ENCODE measurements at regions of chr9 and their contacts with region 1.

Region 1: DNA sequence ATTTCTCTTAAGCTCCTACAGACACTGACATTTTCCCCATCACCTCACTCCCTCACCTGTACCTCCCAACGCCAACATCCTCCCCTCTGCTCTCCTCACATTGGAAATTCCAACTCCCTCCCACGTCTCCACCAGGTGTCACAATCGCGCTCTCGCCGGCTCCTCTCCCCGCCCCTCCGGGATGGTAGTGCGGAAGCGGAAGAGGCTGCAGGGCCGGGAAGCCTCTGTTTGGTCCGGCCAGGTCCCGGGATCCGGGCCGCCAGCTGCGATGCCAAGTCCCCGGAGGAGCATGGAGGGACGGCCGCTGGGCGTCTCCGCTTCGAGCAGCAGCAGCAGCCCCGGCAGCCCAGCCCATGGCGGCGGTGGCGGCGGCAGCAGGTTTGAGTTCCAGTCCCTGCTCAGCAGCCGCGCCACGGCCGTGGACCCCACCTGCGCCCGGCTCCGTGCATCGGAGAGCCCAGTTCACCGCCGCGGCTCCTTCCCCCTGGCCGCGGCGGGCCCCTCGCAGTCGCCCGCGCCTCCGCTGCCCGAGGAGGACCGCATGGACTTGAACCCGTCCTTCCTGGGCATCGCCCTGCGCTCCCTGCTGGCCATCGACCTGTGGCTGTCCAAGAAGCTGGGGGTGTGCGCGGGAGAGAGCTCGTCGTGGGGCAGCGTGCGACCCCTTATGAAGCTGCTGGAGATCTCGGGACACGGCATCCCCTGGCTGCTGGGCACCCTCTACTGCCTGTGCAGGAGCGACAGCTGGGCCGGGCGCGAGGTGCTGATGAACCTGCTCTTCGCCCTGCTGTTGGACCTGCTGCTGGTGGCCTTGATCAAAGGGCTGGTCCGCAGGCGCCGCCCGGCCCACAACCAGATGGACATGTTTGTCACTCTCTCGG is at the start of gene PLPP6:
- DNase-seq: peak; percentile 70 to 86 (median 76)
- H3K4me3 ChIP-seq: peak within 1 kb of the TSS; percentile 42 to 83
- H3K4me3 Mint-ChIP-seq: peak within 1 kb of the TSS; percentile 91 to 99 (median 96)
- H3K27ac ChIP-seq: peak within 1 kb of the TSS; percentile 67
- H3K27ac Mint-ChIP-seq: peak within 1 kb of the TSS; percentile 95 to 99 (median 96)
- H3K4me1 ChIP-seq: peaks cover 58% of the 10 kb centered on the region
- H3K4me1 Mint-ChIP-seq: peaks cover 47 to 78% (median 59%) of the 10 kb centered on the region in 4 donors
- H3K27me3 ChIP-seq: no peaks in the 10 kb centered on the region
- H3K27me3 Mint-ChIP-seq: no peaks in the 10 kb centered on the region
- total RNA-seq, gene PLPP6: 23.3 to 23.8 TPM

Region 2: DNA sequence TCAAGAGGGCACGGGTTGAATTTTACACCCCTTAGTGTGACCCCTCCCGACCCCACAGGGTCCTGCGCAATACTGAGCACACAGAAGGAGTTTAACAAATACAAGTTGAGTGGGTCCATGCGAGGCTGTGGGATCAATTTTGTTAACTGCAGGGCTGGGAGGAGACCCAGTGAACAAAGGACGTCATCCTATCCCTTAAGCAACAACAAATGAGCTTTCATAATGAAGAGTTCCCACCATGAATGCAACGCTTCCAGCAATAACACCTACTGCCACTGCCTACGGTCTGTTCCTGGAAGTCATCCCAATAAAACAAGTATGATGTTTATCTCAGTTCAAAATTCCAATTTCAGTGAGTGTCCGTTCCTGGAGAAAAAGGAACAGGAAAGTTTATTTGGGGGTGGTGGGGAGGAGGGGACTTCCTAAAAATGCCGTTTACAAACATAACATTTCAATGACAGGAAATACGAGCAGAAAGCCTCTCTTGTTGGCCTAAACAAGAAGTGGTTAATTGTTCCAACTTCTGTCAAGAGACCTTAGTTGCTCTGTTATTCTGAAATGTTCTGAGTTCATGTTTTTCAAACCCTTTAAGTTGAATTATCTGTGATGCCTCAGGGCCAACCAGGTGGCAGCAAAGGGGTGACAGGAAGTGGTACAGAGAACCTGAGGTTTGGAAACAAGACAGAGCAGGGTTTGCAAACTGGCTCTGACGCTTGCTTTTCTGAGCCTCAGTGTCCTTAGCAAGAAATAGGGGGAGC is 66.0 kb before region 1 on chr9:
- CTCF ChIA-PET with region 1: no interaction called
- POLR2A ChIA-PET with region 1: interaction called, 4 read pairs
- intact Hi-C with region 1: loop called (anchors 2 kb)
- DNase-seq: peak; percentile 77 to 83 (median 81)
- H3K4me3 ChIP-seq: no peak overlapping the region
- H3K4me3 Mint-ChIP-seq: peak overlapping the region; percentile 32 to 87 (median 62)
- H3K27ac ChIP-seq: peak overlapping the region; percentile 30
- H3K27ac Mint-ChIP-seq: peak overlapping the region; percentile 79 to 98 (median 95)
- H3K4me1 ChIP-seq: peaks cover 51% of the 10 kb centered on the region
- H3K4me1 Mint-ChIP-seq: peaks cover 32 to 62% (median 47%) of the 10 kb centered on the region in 4 donors
- H3K27me3 ChIP-seq: no peaks in the 10 kb centered on the region
- H3K27me3 Mint-ChIP-seq: no peaks in the 10 kb centered on the region

Region 3: GRCh38 chr9:4713849-4714248 is 51.5 kb after region 1 on chr9:
- CTCF ChIA-PET with region 1: no interaction called
- POLR2A ChIA-PET with region 1: no interaction called
- intact Hi-C with region 1: no loop called
- DNase-seq: no peak
- H3K4me3 ChIP-seq: no peak overlapping the region
- H3K4me3 Mint-ChIP-seq: peak overlapping the region in 1 of 8 donors; percentile 1
- H3K27ac ChIP-seq: no peak overlapping the region
- H3K27ac Mint-ChIP-seq: peak overlapping the region in 4 of 7 donors; percentile 1 to 53 (median 7)
- H3K4me1 ChIP-seq: no peaks in the 10 kb centered on the region
- H3K4me1 Mint-ChIP-seq: no peaks in the 10 kb centered on the region
- H3K27me3 ChIP-seq: no peaks in the 10 kb centered on the region
- H3K27me3 Mint-ChIP-seq: no peaks in the 10 kb centered on the region

Region 4: GRCh38 chr9:4762108-4762885 is 99.9 kb after region 1 on chr9:
- CTCF ChIA-PET with region 1: no interaction called
- POLR2A ChIA-PET with region 1: no interaction called
- intact Hi-C with region 1: no loop called
- DNase-seq: peak; percentile 75 to 79 (median 77)
- H3K4me3 ChIP-seq: no peak overlapping the region
- H3K4me3 Mint-ChIP-seq: peak overlapping the region in 6 of 8 donors; percentile 17 to 54 (median 42)
- H3K27ac ChIP-seq: no peak overlapping the region
- H3K27ac Mint-ChIP-seq: peak overlapping the region in 2 of 7 donors; percentile 28 to 71
- H3K4me1 ChIP-seq: peaks cover 11% of the 10 kb centered on the region
- H3K4me1 Mint-ChIP-seq: peaks cover 5 to 12% (median 6%) of the 10 kb centered on the region in 4 donors
- H3K27me3 ChIP-seq: peaks cover 4% of the 10 kb centered on the region
- H3K27me3 Mint-ChIP-seq: peaks cover 0 to 4% of the 10 kb centered on the region in 2 donors

Region 5: GRCh38 chr9:4792572-4793458 is 130.5 kb after region 1 on chr9 and contains the start of gene RCL1:
- CTCF ChIA-PET with region 1: interaction called, 3 read pairs
- POLR2A ChIA-PET with region 1: interaction called, 6 read pairs
- intact Hi-C with region 1: loop called (anchors 5 kb)
- DNase-seq: peak; percentile 95 to 98 (median 97)
- H3K4me3 ChIP-seq: peak within 1 kb of the TSS; percentile 83 to 88
- H3K4me3 Mint-ChIP-seq: peak within 1 kb of the TSS; percentile 93 to 97 (median 95)
- H3K27ac ChIP-seq: peak within 1 kb of the TSS; percentile 70
- H3K27ac Mint-ChIP-seq: peak within 1 kb of the TSS; percentile 84 to 97 (median 96)
- H3K4me1 ChIP-seq: peaks cover 23% of the 10 kb centered on the region
- H3K4me1 Mint-ChIP-seq: peaks cover 29 to 52% (median 38%) of the 10 kb centered on the region in 4 donors
- H3K27me3 ChIP-seq: no peaks in the 10 kb centered on the region
- H3K27me3 Mint-ChIP-seq: peaks cover 0 to 4% of the 10 kb centered on the region in 2 donors
- total RNA-seq, gene RCL1: 15.2 to 17.8 TPM

Measured in CD4-positive, alpha-beta memory T cell (primary cell).